H1 (cell line): ENCODE measurements at regions of chr3 and their contacts with region 1.

Region 1: DNA sequence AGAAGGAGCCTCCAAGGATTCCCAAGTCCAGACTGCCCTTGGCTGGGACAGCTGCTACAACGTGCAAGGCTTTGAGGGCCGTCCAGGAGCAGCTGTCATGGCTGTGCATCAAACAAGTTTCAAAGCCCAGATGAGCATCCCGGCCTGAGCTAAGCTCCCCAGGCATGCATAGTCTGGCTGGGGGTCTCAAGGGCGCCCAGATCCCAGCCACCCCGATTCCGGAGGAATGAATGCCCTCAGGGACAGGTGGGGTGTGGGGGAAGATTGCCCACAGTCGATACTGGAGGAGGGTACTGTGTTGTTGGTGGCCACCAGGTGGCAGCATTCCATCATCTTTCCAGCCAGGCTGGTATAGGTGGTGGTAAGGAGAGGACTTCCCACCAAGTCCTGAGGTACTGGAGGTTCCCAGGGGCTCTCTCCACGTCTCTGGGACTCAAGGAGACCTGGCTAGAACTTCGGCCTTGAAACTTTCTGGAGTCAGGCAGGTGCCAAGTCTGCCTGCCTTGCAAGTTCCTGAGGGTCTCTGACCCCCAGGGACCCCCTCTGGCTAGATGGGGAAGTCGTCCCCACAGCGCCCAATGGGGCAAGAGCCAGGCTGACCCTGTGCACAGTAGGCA is 32.8 kb downstream of the RBM5 start:
- DNase-seq: peak; percentile 65 to 89
- H3K4me3 ChIP-seq: no peak overlapping the region
- H3K27ac ChIP-seq: no peak overlapping the region
- H3K4me1 ChIP-seq: peaks cover 4 to 27% (median 19%) of the 10 kb centered on the region in 4 experiments
- H3K27me3 ChIP-seq: no peaks in the 10 kb centered on the region
- CTCF ChIP-seq: peak in 2 of 3 experiments; percentile 94; a peak in 3 of 4 replicates
- EP300 ChIP-seq: no peak
- POLR2A ChIP-seq: no peak
- RAD21 ChIP-seq: peak; percentile 98

Region 2: DNA sequence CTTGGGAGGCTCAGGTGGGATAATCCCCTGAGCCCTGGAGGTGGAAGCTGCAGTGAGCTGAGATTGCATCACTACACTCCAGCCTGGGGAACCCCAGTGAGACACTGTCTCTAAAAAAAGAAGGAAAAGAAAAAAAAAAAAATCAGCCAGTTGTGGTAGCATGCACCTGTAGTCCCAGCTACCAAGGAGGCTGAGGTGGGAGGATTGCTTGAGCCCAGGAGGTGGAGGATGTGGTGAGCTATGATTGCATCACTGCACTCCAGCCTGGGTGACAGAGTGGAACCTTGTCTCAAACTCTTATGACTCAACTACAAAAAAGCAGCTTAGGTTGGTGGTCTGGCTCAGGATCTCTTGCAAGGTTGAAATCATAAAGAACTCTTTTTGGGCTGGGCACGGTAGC is 744.0 kb before region 1 on chr3:
- CTCF ChIA-PET with region 1: no interaction called
- POLR2A ChIA-PET with region 1: no interaction called
- DNase-seq: no peak
- H3K4me3 ChIP-seq: no peak overlapping the region
- H3K27ac ChIP-seq: no peak overlapping the region
- H3K4me1 ChIP-seq: peaks cover 0 to 2% (median 0%) of the 10 kb centered on the region in 4 experiments; a peak in 1 of 7 replicates
- H3K27me3 ChIP-seq: no peaks in the 10 kb centered on the region
- CTCF ChIP-seq: no peak
- EP300 ChIP-seq: no peak
- POLR2A ChIP-seq: no peak
- RAD21 ChIP-seq: no peak

Region 3: DNA sequence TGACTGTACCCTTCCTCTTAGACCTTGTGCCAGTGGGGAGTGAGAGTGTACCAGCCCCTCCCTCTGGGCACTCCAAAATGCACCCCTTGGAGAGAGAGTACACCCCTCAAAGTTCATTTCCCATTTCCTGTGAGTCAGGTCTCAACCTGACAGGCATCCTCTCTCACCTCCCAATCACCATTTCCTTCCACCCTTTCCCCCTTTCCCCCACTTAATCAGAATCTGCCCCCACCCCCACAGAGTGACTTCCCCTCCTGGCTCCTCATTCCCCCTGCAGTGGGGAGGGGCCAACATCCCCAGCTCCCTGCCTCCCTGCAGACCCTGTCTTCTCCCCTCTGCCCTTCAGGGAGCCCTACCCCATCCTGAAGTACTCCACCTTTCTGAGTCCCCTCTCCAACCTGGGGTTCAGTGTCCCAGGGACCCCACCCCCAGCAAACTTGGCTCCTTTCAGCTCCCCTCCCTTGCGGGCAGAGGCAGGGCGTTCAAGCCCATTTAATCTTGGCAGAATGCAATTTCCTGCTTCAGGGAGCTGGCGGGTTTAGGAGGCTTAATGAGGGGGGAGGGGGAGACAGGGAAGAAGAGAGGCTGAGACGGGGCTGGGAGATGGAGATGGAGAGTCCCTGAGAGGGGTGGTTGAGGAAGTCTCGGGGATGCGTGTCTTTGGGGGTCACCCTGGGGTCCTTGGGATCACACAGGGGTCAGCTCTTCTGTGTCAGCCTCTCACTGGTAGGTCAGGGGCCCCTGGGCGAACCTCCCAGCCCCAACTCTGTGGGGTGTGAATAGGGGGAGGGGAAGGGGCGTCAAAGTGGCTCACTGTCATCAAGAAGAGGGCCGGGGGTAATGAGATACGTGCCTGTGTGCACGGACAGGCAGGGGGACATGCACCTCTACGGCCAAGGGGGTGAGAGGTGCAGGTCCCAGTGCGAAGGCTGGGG is 17.0 kb after region 1 on chr3:
- CTCF ChIA-PET with region 1: interaction called, 63 read pairs
- POLR2A ChIA-PET with region 1: interaction called, 133 read pairs
- DNase-seq: peak in 1 of 2 experiments; percentile 71
- H3K4me3 ChIP-seq: peak overlapping the region in 3 of 4 experiments; percentile 17 to 45 (median 36); a peak in 3 of 8 replicates
- H3K27ac ChIP-seq: peak overlapping the region; percentile 41; the same call in 1 of the 2 replicates
- H3K4me1 ChIP-seq: peaks cover 4 to 32% (median 28%) of the 10 kb centered on the region in 4 experiments
- H3K27me3 ChIP-seq: no peaks in the 10 kb centered on the region; a peak in 1 of 7 replicates
- CTCF ChIP-seq: no peak
- EP300 ChIP-seq: no peak
- POLR2A ChIP-seq: no peak; a peak in 1 of 3 replicates
- RAD21 ChIP-seq: no peak

Region 4: GRCh38 chr3:50163572-50164455 is 42.3 kb after region 1 on chr3:
- CTCF ChIA-PET with region 1: interaction called, 190 read pairs
- POLR2A ChIA-PET with region 1: interaction called, 65 read pairs
- DNase-seq: no peak
- H3K4me3 ChIP-seq: no peak overlapping the region
- H3K27ac ChIP-seq: no peak overlapping the region
- H3K4me1 ChIP-seq: peaks cover 0 to 27% (median 16%) of the 10 kb centered on the region in 4 experiments; a peak in 6 of 7 replicates
- H3K27me3 ChIP-seq: no peaks in the 10 kb centered on the region
- CTCF ChIP-seq: no peak
- EP300 ChIP-seq: no peak
- POLR2A ChIP-seq: no peak
- RAD21 ChIP-seq: no peak

Region 5: GRCh38 chr3:50184242-50184978 is 62.9 kb after region 1 on chr3:
- CTCF ChIA-PET with region 1: interaction called, 591 read pairs
- POLR2A ChIA-PET with region 1: interaction called, 128 read pairs
- DNase-seq: no peak
- H3K4me3 ChIP-seq: no peak overlapping the region
- H3K27ac ChIP-seq: no peak overlapping the region
- H3K4me1 ChIP-seq: no peaks in the 10 kb centered on the region
- H3K27me3 ChIP-seq: no peaks in the 10 kb centered on the region
- CTCF ChIP-seq: no peak
- EP300 ChIP-seq: no peak
- POLR2A ChIP-seq: no peak; a peak in 1 of 3 replicates
- RAD21 ChIP-seq: no peak

Region 6: DNA sequence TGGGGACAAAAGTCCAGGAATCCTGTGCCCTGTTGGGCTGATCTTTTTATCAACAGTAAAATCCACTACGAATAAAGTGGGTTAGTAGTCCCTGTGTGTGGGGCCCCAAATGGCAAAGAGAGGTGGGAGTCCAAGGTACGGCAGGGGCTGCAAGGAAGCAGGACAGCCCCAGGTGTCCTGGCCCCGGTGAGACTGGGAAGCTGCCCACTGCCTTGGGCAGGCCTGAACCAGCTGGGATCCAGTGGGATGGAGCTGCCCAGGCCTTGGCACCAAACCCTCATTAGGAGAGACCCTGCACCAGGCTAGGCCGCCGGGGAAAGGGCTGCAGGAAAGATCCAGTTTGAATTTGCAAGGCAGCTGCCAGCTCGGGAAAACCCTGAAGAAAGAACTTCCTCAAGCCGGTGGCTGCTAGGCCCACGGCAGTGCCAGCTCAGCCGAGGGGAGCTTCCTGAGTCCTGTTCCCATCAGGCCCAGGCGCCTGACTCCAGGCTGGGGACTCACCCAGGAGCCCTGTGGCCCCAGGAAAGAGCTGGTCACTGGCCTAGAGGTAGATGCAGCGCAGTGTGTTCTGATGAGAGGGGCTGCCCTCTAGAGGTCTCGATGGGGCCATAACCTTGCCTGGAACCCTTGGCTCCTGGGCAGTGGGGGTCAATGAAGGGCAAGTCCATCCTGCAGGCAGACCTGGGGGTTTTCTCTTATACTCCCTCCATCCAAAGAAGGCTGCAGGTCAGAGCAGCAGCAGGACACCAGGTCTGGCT is 100.1 kb after region 1 on chr3:
- CTCF ChIA-PET with region 1: interaction called, 14 read pairs
- POLR2A ChIA-PET with region 1: interaction called, 7 read pairs
- DNase-seq: peak in 1 of 2 experiments; percentile 70
- H3K4me3 ChIP-seq: no peak overlapping the region
- H3K27ac ChIP-seq: no peak overlapping the region
- H3K4me1 ChIP-seq: peaks cover 0 to 3% (median 1%) of the 10 kb centered on the region in 4 experiments; a peak in 5 of 7 replicates
- H3K27me3 ChIP-seq: peaks cover 0 to 2% (median 0%) of the 10 kb centered on the region in 4 experiments; a peak in 1 of 7 replicates
- CTCF ChIP-seq: peak in 2 of 3 experiments; percentile 77 to 91; a peak in 3 of 4 replicates
- EP300 ChIP-seq: no peak
- POLR2A ChIP-seq: no peak
- RAD21 ChIP-seq: peak; percentile 74 to 81